IMR-90 (cell line): ENCODE measurements at regions of chr3 and their contacts with region 1.

Region 1: GRCh38 chr3:58008140-58009025 is at the start of gene FLNB:
- DNase-seq: peak; percentile 54
- ATAC-seq: peak; percentile 82
- H3K4me3 ChIP-seq: peak within 1 kb of the TSS; percentile 95
- H3K27ac ChIP-seq: peak within 1 kb of the TSS; percentile 80
- H3K4me1 ChIP-seq: peaks cover 20% of the 10 kb centered on the region
- H3K27me3 ChIP-seq: no peaks in the 10 kb centered on the region
- CTCF ChIP-seq: peak; percentile 76
- POLR2A ChIP-seq: peak; percentile 89
- RAD21 ChIP-seq: peak; percentile 69
- total RNA-seq, gene FLNB: 124 and 136 TPM in 2 replicates

Region 2: GRCh38 chr3:57169872-57170623 is 838.3 kb before region 1 on chr3:
- CTCF ChIA-PET with region 1: no interaction called
- POLR2A ChIA-PET with region 1: no interaction called
- dilution Hi-C with region 1: no loop called
- in situ Hi-C with region 1: no loop called
- intact Hi-C with region 1: no loop called
- DNase-seq: peak; percentile 52
- ATAC-seq: peak; percentile 85
- H3K4me3 ChIP-seq: peak overlapping the region; percentile 43
- H3K27ac ChIP-seq: no peak overlapping the region
- H3K4me1 ChIP-seq: peaks cover 3% of the 10 kb centered on the region; the same call in 1 of the 2 replicates
- H3K27me3 ChIP-seq: peaks cover 20% of the 10 kb centered on the region
- CTCF ChIP-seq: peak; percentile 77
- POLR2A ChIP-seq: no peak
- RAD21 ChIP-seq: peak; percentile 76

Region 3: DNA sequence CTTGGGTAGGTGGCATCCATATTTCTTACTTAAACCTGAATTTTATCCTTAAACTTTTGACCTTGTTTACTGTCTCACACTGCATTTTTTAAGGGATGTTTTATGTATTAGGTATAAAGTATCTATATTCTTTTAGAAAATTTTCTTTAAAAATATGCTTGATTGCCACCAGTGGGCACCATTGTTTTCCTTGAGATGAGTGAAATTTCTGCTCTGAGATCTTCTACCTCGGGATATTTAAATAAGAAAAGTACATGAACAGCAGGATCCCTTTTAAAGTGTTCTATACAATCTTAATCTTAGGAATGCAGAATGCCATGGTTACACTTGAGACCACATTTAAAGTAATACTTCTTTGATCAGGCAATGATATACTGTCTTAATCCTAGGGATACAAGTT is 143.5 kb before region 1 on chr3:
- CTCF ChIA-PET with region 1: no interaction called
- POLR2A ChIA-PET with region 1: no interaction called
- dilution Hi-C with region 1: no loop called
- in situ Hi-C with region 1: no loop called
- intact Hi-C with region 1: loop called (anchors 5 kb)
- DNase-seq: peak; percentile 45
- ATAC-seq: peak; percentile 63
- H3K4me3 ChIP-seq: no peak overlapping the region
- H3K27ac ChIP-seq: no peak overlapping the region
- H3K4me1 ChIP-seq: no peaks in the 10 kb centered on the region
- H3K27me3 ChIP-seq: no peaks in the 10 kb centered on the region
- CTCF ChIP-seq: peak; percentile 61
- POLR2A ChIP-seq: no peak
- RAD21 ChIP-seq: peak; percentile 66

Region 4: GRCh38 chr3:58059349-58060321 is 51.3 kb after region 1 on chr3:
- CTCF ChIA-PET with region 1: interaction called, 13 read pairs
- POLR2A ChIA-PET with region 1: no interaction called
- dilution Hi-C with region 1: no loop called
- in situ Hi-C with region 1: no loop called
- intact Hi-C with region 1: loop called (anchors 1 kb)
- DNase-seq: peak; percentile 99
- ATAC-seq: peak; percentile 92
- H3K4me3 ChIP-seq: no peak overlapping the region
- H3K27ac ChIP-seq: peak overlapping the region; percentile 80
- H3K4me1 ChIP-seq: peaks cover 34% of the 10 kb centered on the region
- H3K27me3 ChIP-seq: no peaks in the 10 kb centered on the region
- CTCF ChIP-seq: no peak
- POLR2A ChIP-seq: peak; percentile 89
- RAD21 ChIP-seq: peak; percentile 40

Region 5: GRCh38 chr3:58167431-58168351 is 159.3 kb after region 1 on chr3:
- CTCF ChIA-PET with region 1: interaction called, 6 read pairs
- POLR2A ChIA-PET with region 1: no interaction called
- dilution Hi-C with region 1: no loop called
- in situ Hi-C with region 1: no loop called
- intact Hi-C with region 1: loop called (anchors 2 kb)
- DNase-seq: peak; percentile 65
- ATAC-seq: peak; percentile 89
- H3K4me3 ChIP-seq: no peak overlapping the region
- H3K27ac ChIP-seq: no peak overlapping the region
- H3K4me1 ChIP-seq: peaks cover 21% of the 10 kb centered on the region
- H3K27me3 ChIP-seq: no peaks in the 10 kb centered on the region
- CTCF ChIP-seq: peak; percentile 80
- POLR2A ChIP-seq: no peak
- RAD21 ChIP-seq: no peak

Region 6: DNA sequence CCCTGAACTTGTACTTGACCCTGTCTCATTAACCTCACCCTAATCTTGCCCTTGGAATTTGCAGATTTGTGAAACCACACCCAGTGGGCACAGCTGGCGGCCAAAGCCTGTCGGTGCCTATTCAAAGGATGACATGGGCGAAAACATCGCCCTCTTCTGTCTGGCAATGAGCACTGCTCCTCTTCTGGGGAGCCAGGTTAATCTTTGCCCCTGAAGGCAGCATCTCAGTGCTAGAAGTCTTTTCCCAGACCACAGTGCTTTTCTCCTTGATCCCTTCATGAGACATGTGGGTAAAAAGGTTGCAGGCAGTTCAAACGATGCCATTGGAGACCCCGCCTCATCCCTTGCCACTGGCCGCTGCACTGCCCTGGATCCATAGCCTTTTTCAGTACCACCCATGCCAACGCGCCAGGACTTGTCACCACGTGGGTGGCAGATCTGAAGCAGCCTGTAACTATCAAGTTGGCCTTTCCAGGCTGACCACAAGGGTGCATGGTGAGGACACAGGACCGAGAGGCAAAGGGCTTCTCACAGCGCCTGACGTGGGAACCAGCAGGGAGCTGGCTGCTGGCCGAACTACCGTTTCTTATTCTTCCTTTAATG is 208.9 kb after region 1 on chr3:
- CTCF ChIA-PET with region 1: no interaction called
- POLR2A ChIA-PET with region 1: no interaction called
- dilution Hi-C with region 1: no loop called
- in situ Hi-C with region 1: no loop called
- intact Hi-C with region 1: loop called (anchors 2 kb)
- DNase-seq: peak; percentile 51
- ATAC-seq: peak; percentile 97
- H3K4me3 ChIP-seq: no peak overlapping the region
- H3K27ac ChIP-seq: no peak overlapping the region
- H3K4me1 ChIP-seq: peaks cover 2% of the 10 kb centered on the region; the same call in 1 of the 2 replicates
- H3K27me3 ChIP-seq: peaks cover 19% of the 10 kb centered on the region
- CTCF ChIP-seq: peak; percentile 64
- POLR2A ChIP-seq: no peak
- RAD21 ChIP-seq: peak; percentile 64

Region 7: DNA sequence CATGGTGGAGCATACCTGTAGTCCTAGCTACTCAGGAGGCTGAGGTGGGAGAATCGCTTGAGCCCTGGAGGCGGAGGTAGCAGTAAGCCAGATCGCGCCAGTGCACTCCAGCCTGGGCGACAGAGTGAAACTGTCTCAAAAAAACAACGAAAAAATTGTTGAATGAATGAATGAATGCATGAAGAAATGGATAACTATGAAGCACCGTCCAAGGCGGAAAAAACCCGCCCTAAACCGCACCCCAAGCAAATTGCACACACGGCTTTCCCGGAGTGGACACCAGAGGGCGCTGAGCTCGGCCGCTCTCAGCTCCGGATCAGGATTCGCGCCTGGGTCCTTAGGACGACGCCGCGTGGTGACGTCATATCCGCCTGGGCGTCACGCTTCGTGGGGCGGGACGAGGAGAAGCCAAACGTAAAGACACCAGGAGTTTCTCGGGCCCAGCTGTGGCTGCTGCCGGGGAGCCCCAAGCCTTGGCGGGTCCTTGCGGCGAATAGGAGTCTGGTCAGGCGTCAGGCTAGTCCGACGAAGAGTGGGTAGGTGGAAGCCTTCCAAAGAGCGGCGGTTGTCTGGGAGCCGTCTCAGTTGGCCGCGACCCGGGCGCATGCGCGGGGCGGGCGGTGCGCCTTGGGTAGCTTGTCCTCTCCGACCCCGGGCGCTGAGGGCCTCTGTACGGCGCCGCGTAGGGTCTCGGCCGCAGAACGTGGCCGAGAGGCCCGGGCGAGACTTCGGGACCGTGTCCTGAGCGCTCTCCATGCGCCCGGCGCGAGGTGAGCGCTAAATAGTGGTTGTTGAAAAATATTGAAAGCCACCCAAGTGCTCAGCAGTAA is 297.7 kb after region 1 on chr3 and contains the starts of genes HTD2 and RPP14:
- CTCF ChIA-PET with region 1: no interaction called
- POLR2A ChIA-PET with region 1: no interaction called
- dilution Hi-C with region 1: no loop called
- in situ Hi-C with region 1: loop called (anchors 10 kb)
- intact Hi-C with region 1: loop called (anchors 5 kb)
- DNase-seq: peak; percentile 97
- ATAC-seq: peak; percentile 92
- H3K4me3 ChIP-seq: peak within 1 kb of the TSS; percentile 74
- H3K27ac ChIP-seq: peak within 1 kb of the TSS; percentile 94
- H3K4me1 ChIP-seq: peaks cover 6% of the 10 kb centered on the region
- H3K27me3 ChIP-seq: peaks cover 9% of the 10 kb centered on the region
- CTCF ChIP-seq: peak; percentile 98
- POLR2A ChIP-seq: peak; percentile 92
- RAD21 ChIP-seq: peak; percentile 42
- total RNA-seq, gene HTD2: 11.4 and 13.3 TPM in 2 replicates
- total RNA-seq, gene RPP14: 6.6 and 11.9 TPM in 2 replicates